Tibial artery (tissue), 4 donors: ENCODE measurements at regions of chr2 and their contacts with region 1.

Region 1: DNA sequence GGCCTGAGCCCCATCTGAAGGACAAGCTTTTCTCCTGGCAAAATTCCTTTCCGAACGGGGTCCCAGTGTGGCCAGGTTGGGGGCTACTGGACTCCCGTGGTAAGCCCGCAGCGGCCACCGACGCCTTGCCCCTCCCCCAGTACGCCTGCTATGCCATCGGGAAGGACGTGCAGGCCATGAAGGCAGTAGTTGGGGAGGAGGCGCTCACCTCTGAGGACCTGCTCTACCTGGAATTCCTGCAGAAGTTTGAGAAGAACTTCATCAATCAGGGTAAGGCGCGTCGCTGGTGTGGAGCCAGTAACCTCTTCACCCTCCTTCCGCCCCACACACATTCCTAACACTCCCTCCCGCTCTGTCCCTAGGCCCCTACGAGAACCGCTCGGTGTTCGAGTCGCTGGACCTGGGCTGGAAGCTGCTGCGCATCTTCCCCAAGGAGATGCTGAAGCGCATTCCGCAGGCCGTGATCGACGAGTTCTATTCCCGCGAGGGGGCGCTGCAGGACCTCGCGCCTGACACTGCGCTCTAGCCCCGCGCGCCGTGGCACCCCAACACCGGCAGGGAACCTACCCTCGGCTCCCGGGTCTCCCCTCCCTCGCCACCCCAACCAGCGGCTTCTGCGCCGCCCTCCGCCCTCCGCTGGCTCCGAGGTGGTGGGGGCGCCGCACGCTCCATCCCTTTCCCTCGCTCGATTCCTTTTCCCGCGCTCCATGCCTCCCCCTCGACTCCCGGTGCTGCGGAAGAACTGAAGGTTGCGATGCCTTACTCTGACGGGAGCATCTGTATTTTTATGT is 13.6 kb upstream of the ANKRD53 start:
- DNase-seq: peak; percentile 58 to 80
- H3K4me3 ChIP-seq: peak overlapping the region; percentile 49
- H3K27ac ChIP-seq: no peak overlapping the region
- H3K4me1 ChIP-seq: peaks cover 0 to 11% (median 5%) of the 10 kb centered on the region in 4 donors
- H3K27me3 ChIP-seq: peaks cover 0 to 34% of the 10 kb centered on the region in 2 donors
- CTCF ChIP-seq: peak; percentile 70 to 83

Region 2: DNA sequence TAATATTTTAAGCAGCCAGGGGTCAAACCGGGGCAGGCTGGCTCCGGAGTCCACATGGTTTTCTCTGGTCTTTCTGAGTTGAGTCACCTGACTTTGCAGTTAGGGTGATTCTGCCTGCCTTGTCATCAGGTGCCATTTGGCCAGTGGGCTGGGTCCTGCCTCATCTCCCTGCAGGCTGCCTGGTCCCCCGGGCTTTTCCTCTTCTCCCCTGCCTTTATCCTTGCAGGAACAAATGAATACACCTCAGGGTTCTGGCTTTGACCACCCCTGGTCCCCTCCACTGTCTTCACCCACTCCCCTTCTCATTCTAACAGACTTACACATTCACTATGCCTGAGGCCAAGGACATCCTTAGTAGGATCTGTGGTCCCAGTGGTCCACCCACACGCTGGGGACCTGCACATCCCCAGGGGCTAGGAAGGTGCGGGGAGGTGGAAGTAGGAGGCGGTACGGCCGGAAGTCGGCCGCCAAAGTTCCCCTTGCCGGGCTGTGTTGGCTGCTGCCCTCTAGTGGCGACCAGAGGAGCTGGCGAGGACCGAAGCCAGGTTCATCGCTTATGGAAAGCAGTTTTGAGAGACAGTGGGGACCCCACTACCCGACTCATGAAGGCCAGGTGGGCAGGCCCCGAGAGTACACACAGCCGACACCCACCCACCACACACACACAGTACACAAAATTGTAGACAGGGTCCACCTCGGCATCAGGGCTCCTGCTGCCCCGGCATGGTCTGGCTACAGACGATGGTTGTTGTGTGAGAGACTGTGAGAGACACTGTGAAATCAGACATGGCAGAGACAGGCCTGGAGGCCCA is 36.2 kb after region 1 on chr2:
- intact Hi-C with region 1: loop called (anchors 5 kb)
- DNase-seq: peak; percentile 64 to 80
- H3K4me3 ChIP-seq: peak overlapping the region; percentile 11 to 19
- H3K27ac ChIP-seq: no peak overlapping the region
- H3K4me1 ChIP-seq: peaks cover 0 to 10% (median 8%) of the 10 kb centered on the region in 4 donors
- H3K27me3 ChIP-seq: peaks cover 0 to 12% of the 10 kb centered on the region in 2 donors
- CTCF ChIP-seq: peak; percentile 72 to 95

Region 3: GRCh38 chr2:71103809-71104208 is 139.0 kb after region 1 on chr2:
- intact Hi-C with region 1: no loop called
- DNase-seq: no peak
- H3K4me3 ChIP-seq: no peak overlapping the region
- H3K27ac ChIP-seq: no peak overlapping the region
- H3K4me1 ChIP-seq: no peaks in the 10 kb centered on the region
- H3K27me3 ChIP-seq: no peaks in the 10 kb centered on the region
- CTCF ChIP-seq: no peak

Region 4: GRCh38 chr2:71313016-71313766 is 348.4 kb after region 1 on chr2:
- intact Hi-C with region 1: no loop called
- DNase-seq: no peak
- H3K4me3 ChIP-seq: no peak overlapping the region
- H3K27ac ChIP-seq: no peak overlapping the region
- H3K4me1 ChIP-seq: no peaks in the 10 kb centered on the region
- H3K27me3 ChIP-seq: no peaks in the 10 kb centered on the region
- CTCF ChIP-seq: no peak